HEK293 (cell line): ENCODE measurements at regions of chr22 and their contacts with region 1.

Region 1: GRCh38 chr22:41946629-41947423 is at the start of gene CENPM:
- H3K4me3 ChIP-seq: peak within 1 kb of the TSS; percentile 68
- H3K27ac ChIP-seq: peak within 1 kb of the TSS; percentile 90
- H3K4me1 ChIP-seq: no peaks in the 10 kb centered on the region
- CTCF ChIP-seq: peak; percentile 2; the same call in 1 of the 2 replicates

Region 2: DNA sequence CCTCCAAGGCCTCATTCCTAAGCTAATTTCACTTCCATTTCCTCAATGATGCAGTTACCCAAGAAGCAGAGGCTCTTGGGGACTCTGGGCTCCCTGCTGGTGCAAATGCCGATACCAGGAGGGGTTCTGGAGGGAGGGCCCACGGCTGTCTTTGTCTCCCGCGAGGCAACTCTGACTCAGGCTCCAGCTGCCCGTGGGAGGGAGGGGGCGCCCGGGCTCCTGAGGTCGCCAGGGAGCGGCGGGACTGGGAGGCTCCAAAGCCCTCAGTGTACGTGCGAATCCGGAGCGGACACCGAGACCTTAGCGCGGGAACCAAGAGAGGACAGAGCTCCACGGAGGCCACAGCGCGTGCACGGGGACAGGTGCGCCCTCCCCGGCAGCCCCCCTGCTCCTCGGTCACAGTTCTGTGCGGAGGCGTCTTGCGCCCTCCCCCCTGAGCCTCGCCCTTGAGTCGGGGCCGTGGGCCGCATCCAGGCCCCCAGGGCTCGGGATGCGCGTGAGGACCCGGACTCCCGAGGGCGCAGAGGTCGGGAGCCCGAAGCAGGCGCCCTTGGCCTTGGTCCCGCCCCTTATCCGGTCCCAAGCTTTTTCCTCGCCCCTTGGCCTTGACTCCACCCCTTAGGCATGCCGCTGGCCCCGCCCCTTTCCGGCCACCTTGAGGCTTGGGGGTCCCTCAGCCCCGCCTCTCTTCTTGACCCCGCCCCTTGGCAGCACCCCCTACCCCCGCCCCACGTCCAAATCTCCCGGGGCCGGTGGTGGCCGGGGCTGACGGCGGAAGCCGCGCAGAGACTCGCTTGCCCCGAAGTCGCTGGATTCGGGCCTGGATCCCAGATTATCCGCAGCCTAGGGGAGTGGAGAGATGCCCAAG is 27.2 kb before region 1 on chr22:
- CTCF ChIA-PET with region 1: no interaction called
- POLR2A ChIA-PET with region 1: interaction called, 13 read pairs
- H3K4me3 ChIP-seq: no peak overlapping the region
- H3K27ac ChIP-seq: no peak overlapping the region
- H3K4me1 ChIP-seq: peaks cover 6% of the 10 kb centered on the region
- CTCF ChIP-seq: no peak

Region 3: GRCh38 chr22:41935015-41935351 is 11.8 kb before region 1 on chr22:
- CTCF ChIA-PET with region 1: interaction called, 3 read pairs
- POLR2A ChIA-PET with region 1: interaction called, 31 read pairs
- H3K4me3 ChIP-seq: no peak overlapping the region
- H3K27ac ChIP-seq: 0 out of 2 replicates have a peak overlapping the region, but pooled peaks have one; percentile 1
- H3K4me1 ChIP-seq: no peaks in the 10 kb centered on the region
- CTCF ChIP-seq: no peak

Region 4: GRCh38 chr22:42079319-42080251 is 132.8 kb after region 1 on chr22 and contains the start of gene SMDT1:
- CTCF ChIA-PET with region 1: interaction called, 3 read pairs
- POLR2A ChIA-PET with region 1: interaction called, 17 read pairs
- H3K4me3 ChIP-seq: peak within 1 kb of the TSS; percentile 93
- H3K27ac ChIP-seq: peak within 1 kb of the TSS; percentile 73
- H3K4me1 ChIP-seq: peaks cover 4% of the 10 kb centered on the region; the same call in 1 of the 2 replicates
- CTCF ChIP-seq: no peak